ENCODE measurements at regions of chr3 and their contacts with region 1.

Region 1: GRCh38 chr3:11060500-11061251 is 68.1 kb downstream of the SLC6A1 start:
- DNase-seq: peak; percentile 23
- H3K4me3 ChIP-seq: peak overlapping the region; percentile 20; the same call in 1 of the 2 replicates
- H3K27ac ChIP-seq: no peak overlapping the region
- H3K27me3 ChIP-seq: peaks cover 8% of the 10 kb centered on the region
- CTCF ChIP-seq: peak; percentile 85

Region 2: DNA sequence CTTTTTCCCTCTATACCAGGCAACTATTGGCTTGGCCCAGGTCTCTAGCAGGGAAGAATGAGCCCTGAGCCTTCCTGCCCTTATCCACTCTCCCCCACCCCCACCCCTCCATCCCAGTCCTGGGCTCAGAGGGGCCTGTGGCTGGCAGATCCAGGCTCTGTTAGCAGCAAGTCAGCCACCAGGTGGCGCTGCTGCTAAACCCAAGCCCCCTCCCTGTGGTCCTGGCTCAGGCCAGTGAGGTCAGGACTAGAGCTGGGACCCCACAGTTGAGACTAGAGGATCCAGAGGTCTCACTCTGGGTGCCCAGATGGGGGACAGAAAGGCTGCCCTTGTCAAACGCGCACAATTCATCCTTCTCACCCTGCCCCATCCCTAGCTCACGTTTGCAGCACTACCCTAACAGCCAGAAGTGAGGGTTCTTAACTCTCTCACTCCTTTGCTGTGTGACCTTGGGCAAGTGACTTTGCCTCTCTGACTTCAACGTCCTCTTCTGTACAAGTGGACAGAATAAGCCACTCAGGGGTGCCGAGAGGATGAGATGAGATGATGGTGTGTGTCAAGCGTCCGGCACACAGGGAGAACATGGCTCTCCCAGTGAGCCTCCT is 114.9 kb before region 1 on chr3:
- CTCF ChIA-PET with region 1: interaction called, 51 read pairs
- POLR2A ChIA-PET with region 1: no interaction called
- DNase-seq: peak; percentile 6
- H3K4me3 ChIP-seq: no peak overlapping the region
- H3K27ac ChIP-seq: no peak overlapping the region
- H3K27me3 ChIP-seq: peaks cover 5% of the 10 kb centered on the region
- CTCF ChIP-seq: peak; percentile 78

Region 3: DNA sequence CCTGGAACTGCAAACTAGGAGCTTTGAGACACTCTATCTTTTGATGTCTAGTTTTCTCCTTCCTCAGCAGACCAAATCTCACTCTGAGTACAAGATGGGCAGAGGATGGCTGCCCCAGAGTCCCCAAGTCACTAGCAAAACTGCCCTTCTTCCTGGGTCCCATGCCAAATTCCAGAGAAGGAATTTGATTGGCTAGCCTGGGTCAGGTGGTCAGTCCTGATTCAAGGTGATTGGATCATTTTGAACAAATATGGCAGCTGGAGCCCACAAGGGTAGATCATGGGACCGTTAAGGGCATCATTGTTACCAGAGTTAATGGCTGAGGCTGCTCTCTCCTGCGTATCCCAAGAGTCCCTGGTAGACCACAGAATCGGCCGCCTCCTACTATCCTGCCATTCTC is 46.4 kb before region 1 on chr3:
- CTCF ChIA-PET with region 1: no interaction called
- POLR2A ChIA-PET with region 1: no interaction called
- DNase-seq: no peak
- H3K4me3 ChIP-seq: no peak overlapping the region
- H3K27ac ChIP-seq: no peak overlapping the region
- H3K27me3 ChIP-seq: peaks cover 20% of the 10 kb centered on the region
- CTCF ChIP-seq: no peak

Region 4: DNA sequence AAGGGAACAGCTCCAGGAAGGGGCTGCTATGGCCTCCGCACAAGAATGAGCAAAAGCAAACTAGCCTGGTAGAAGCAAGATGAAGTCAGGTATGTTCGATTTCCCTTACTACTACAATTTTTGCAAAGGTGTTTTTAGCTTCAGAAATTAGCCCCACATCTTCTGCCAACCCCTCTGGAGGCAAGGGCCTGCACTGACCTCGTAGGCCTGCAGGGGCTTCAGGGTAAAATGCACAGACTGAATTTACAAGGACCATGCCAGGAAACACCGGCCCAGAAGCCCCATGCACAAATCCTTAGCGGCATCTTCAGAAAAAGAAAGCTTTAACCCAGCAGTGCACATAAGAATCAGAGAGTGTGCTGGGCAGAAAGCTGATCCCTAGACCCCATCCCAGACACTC is 15.1 kb before region 1 on chr3:
- CTCF ChIA-PET with region 1: interaction called, 19 read pairs
- POLR2A ChIA-PET with region 1: no interaction called
- DNase-seq: no peak
- H3K4me3 ChIP-seq: no peak overlapping the region
- H3K27ac ChIP-seq: no peak overlapping the region
- H3K27me3 ChIP-seq: peaks cover 43% of the 10 kb centered on the region
- CTCF ChIP-seq: no peak

Region 5: DNA sequence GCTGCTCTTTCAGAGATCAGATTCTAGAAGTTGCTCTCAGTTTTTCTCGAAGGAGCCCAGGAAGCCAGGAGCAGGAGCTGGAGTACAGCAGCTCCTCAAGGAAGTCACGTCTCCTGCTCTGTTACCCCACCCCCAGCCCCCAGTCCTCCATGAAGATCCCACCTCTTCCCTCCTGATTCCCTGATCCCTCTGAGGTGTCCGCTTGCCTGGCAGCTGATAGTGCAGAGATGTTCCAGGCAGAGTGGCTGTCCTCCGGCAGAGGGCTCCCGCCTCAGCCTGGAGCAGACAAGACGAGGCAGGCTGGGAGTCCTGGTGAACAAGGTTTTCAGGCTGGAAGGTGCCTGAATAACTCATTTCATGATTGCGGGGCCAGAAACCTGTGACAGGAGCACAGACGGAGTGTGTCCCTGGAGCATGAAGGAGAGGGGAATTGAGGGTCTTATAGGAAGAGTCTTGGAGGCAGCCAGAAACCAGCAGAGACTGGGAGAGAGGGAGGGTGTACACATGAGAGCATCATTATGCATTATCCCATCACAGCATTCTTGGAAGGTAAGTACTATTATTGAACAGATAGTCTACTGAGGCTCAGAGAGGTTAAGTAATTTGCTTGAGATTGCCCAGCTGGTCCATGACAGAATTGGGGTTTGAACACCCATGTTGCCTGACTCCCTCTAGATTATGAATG is 94.8 kb after region 1 on chr3:
- CTCF ChIA-PET with region 1: interaction called, 41 read pairs
- POLR2A ChIA-PET with region 1: no interaction called
- DNase-seq: peak; percentile 60
- H3K4me3 ChIP-seq: peak overlapping the region; percentile 85
- H3K27ac ChIP-seq: peak overlapping the region; percentile 75
- H3K27me3 ChIP-seq: no peaks in the 10 kb centered on the region
- CTCF ChIP-seq: peak; percentile 96

Region 6: GRCh38 chr3:11195721-11196332 is 135.2 kb after region 1 on chr3:
- CTCF ChIA-PET with region 1: interaction called, 10 read pairs
- POLR2A ChIA-PET with region 1: no interaction called
- DNase-seq: no peak
- H3K4me3 ChIP-seq: 0 out of 2 replicates have a peak overlapping the region, but pooled peaks have one; percentile 0
- H3K27ac ChIP-seq: peak overlapping the region; percentile 77
- H3K27me3 ChIP-seq: no peaks in the 10 kb centered on the region
- CTCF ChIP-seq: peak; percentile 13; the same call in 1 of the 2 replicates

Region 7: DNA sequence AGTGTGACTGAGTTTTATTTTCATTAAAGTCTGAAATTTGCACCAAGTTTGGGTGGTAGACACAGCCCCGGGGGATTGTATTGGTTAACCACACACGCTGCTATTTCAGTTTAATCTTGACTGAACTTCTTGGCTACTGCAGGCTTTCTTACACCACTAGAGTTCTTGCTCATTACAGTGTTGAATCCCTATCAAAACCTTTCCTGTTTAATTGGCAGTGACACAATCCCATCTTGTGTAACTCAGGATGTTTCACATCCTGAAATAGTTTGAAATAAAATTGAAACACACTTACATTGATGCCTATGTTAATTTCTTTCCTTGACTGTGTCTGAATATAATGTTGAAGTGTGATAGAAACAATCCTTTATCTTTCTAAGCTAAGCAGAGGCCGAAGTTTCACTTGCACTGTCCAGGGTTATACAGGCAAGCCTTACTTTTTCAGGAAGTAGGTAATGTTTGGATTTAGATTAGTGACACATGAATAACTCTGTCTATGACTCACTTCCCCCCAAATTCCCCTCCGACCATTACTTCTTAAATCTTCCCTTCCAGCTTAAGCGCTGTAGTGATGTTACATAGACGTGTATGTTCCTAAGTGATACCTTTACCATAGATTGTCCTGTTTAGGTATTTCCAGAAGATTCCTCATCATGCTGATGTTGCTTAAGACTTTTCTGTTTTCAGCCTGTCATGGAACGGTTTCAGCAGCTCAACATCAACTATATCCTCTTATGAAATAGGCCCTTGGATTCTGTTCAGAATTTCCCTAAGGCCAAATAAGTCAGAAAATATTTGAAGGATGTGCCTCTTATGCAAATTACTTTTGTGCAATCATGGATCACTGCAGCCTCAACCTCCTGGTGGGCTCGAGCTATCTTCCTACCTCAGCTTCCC is 228.4 kb after region 1 on chr3:
- CTCF ChIA-PET with region 1: interaction called, 11 read pairs
- POLR2A ChIA-PET with region 1: no interaction called
- DNase-seq: peak; percentile 74
- H3K4me3 ChIP-seq: peak overlapping the region; percentile 10; the same call in 1 of the 2 replicates
- H3K27ac ChIP-seq: peak overlapping the region; percentile 77
- H3K27me3 ChIP-seq: no peaks in the 10 kb centered on the region
- CTCF ChIP-seq: no peak

Region 8: GRCh38 chr3:11651900-11652299 is 591.2 kb after region 1 on chr3:
- CTCF ChIA-PET with region 1: interaction called, 13 read pairs
- POLR2A ChIA-PET with region 1: no interaction called
- DNase-seq: no peak
- H3K4me3 ChIP-seq: no peak overlapping the region
- H3K27ac ChIP-seq: no peak overlapping the region
- H3K27me3 ChIP-seq: no peaks in the 10 kb centered on the region
- CTCF ChIP-seq: peak; percentile 46

Measured in AG04450 (cell line).